Activated T-helper 1 cell treated with anti-CD3 and anti-CD28 coated beads, Interleukin-12 subunit alpha, Interleukin-12 subunit beta, Interleukin-2, Interleukin-4 antibody, amounts not matched to agents 30 ng/mL and 10 ng/mL and 1 ng/mL, durations not matched to agents 14 hours and 24 hours and 36 hours (primary cell): ENCODE measurements at regions of chr1 and their contacts with region 1.

Region 1: GRCh38 chr1:23148084-23148483 is 20.6 kb downstream of the LUZP1 start:
- DNase-seq: no peak
- H3K4me3 Mint-ChIP-seq: peak overlapping the region; percentile 38
- H3K27ac Mint-ChIP-seq: peak overlapping the region; percentile 81
- H3K4me1 Mint-ChIP-seq: peaks cover 30% of the 10 kb centered on the region
- H3K27me3 Mint-ChIP-seq: no peaks in the 10 kb centered on the region

Region 2: GRCh38 chr1:23168457-23169194 is 20.5 kb after region 1 on chr1 and contains the start of gene LUZP1:
- intact Hi-C with region 1: loop called (anchors 1 kb)
- DNase-seq: peak; percentile 82
- H3K4me3 Mint-ChIP-seq: peak within 1 kb of the TSS; percentile 99
- H3K27ac Mint-ChIP-seq: peak within 1 kb of the TSS; percentile 93
- H3K4me1 Mint-ChIP-seq: peaks cover 25% of the 10 kb centered on the region
- H3K27me3 Mint-ChIP-seq: no peaks in the 10 kb centered on the region
- total RNA-seq, gene LUZP1: 23.3 and 27.7 TPM in 2 replicates

Region 3: GRCh38 chr1:23184212-23184934 is 36.3 kb after region 1 on chr1:
- intact Hi-C with region 1: no loop called
- DNase-seq: peak; percentile 17
- H3K4me3 Mint-ChIP-seq: peak overlapping the region; percentile 49
- H3K27ac Mint-ChIP-seq: no peak overlapping the region
- H3K4me1 Mint-ChIP-seq: peaks cover 12% of the 10 kb centered on the region
- H3K27me3 Mint-ChIP-seq: peaks cover 14% of the 10 kb centered on the region

Region 4: DNA sequence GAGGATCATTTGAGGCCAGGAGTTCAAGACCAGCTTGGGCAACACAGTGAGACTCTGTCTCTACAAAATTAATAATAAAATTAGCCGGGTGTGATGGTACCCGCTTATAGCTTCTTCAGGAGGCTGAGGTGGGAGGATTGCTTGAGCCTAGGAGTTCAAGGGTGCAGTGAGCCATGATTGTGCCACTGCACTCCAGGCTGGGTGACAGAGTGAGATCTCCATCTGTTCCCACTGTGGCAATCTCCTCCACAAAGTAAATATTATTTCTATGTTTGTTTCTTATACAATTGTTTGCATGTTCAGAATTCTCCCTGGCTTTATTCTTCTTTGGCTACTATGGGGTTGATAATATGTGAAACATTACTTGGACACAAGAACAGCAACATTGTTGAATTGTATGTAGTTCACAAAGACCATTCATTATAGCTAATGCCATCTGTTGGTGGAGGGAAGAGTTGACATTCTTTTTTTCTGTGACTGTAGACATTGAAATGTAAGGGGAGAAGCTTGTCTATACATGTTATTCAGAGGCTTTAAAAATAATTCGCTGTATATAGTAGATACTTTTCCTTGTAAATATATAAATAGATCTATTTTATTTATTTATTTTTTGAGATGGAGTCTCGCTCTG is 879.9 kb after region 1 on chr1:
- intact Hi-C with region 1: no loop called
- DNase-seq: no peak
- H3K4me3 Mint-ChIP-seq: no peak overlapping the region
- H3K27ac Mint-ChIP-seq: no peak overlapping the region
- H3K4me1 Mint-ChIP-seq: no peaks in the 10 kb centered on the region
- H3K27me3 Mint-ChIP-seq: no peaks in the 10 kb centered on the region